ENCODE measurements at regions of chr12 and their contacts with region 1.

Region 1: GRCh38 chr12:50953045-50953444 is 701 bp downstream of the HIGD1C start:
- DNase-seq: no peak
- ATAC-seq: no peak
- H3K4me3 ChIP-seq: no peak overlapping the region
- H3K27ac ChIP-seq: no peak overlapping the region
- H3K4me1 ChIP-seq: peaks cover 0 to 3% (median 0%) of the 10 kb centered on the region in 12 donors
- H3K27me3 ChIP-seq: no peaks in the 10 kb centered on the region
- CTCF ChIP-seq: no peak
- POLR2A ChIP-seq: no peak

Region 2: DNA sequence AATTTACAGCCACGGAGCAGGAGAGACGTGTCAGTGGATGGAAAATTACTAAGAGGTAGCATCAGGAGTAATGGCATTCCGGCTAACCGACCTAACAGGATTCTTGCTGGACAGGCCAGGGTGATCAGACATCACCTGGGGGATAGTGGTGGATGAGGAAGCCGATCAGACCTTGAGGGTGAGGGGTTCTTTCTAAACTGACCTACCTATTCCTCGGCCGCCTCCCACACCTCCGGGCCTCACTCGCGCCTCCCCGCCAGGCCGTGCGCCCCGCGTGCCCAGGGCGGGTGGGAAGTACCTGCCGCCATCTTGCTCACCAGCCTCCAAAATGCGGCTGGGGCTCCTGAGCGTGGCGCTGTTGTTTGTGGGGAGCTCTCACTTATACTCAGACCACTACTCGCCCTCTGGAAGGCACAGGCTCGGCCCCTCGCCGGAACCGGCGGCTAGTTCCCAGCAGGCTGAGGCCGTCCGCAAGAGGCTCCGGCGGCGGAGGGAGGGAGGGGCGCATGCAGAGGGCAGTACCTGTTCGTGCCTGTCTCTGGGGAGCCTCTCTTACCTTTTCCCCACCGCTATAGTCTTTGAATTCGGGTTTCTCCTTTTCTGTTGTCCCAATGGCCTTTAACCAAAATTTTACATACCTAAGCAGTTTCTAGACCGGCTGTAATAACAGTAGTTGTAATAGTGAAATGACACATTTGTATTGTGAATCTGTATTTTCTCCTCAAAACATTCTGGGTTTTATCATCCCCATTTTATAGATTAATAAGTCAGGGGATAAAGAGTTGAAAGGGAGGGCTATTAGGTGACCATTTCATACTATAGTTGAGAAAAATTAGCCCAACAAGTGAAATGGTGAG is 110.2 kb before region 1 on chr12 and contains the start of gene TMPRSS12:
- intact Hi-C with region 1: loop called in 1 of 10 experiments (anchors 10 kb)
- DNase-seq: peak in 2 of 5 donors; percentile 29 to 63
- ATAC-seq: peak in 2 of 4 donors; percentile 43 to 66
- H3K4me3 ChIP-seq: peak within 1 kb of the TSS in 9 of 12 donors; percentile 7 to 46 (median 35)
- H3K27ac ChIP-seq: no peak within 1 kb of the TSS
- H3K4me1 ChIP-seq: peaks cover 0 to 5% (median 0%) of the 10 kb centered on the region in 12 donors
- H3K27me3 ChIP-seq: peaks cover 0 to 4% (median 0%) of the 10 kb centered on the region in 9 donors
- CTCF ChIP-seq: peak in 2 of 12 donors; percentile 21 to 25
- POLR2A ChIP-seq: no peak
- total RNA-seq, gene TMPRSS12: not detected

Measured in heart left ventricle (tissue), 16 donors.